Heart left ventricle (tissue), 16 donors: ENCODE measurements at regions of chr4 and their contacts with region 1.

Region 1: GRCh38 chr4:18318682-18319388 is 297.3 kb upstream of the LCORL start:
- DNase-seq: peak; percentile 24 to 66 (median 40)
- ATAC-seq: peak in 3 of 4 donors; percentile 68 to 93 (median 80)
- H3K4me3 ChIP-seq: peak overlapping the region in 9 of 12 donors; percentile 8 to 43 (median 20)
- H3K27ac ChIP-seq: peak overlapping the region in 5 of 12 donors; percentile 21 to 54 (median 27)
- H3K4me1 ChIP-seq: peaks cover 0 to 10% (median 0%) of the 10 kb centered on the region in 12 donors
- H3K27me3 ChIP-seq: no peaks in the 10 kb centered on the region
- CTCF ChIP-seq: no peak
- POLR2A ChIP-seq: no peak

Region 2: DNA sequence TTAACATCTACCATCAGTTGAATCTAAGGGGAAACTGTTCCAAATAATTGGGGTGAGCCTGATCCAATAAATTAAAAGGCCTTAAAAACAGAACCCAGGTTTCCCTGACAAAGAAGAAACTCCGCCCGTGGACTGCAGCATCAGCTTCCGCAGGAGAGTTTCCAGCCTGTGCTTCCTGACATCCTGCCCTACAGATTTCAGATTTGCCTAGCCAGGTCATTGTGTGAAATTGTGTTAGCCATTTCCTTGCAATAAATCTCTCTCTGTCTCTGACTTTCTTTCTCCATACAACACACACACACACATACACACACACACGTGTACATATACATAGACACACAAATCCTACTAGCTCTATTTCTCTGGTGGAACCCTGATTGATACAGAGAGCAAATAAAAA is 249.0 kb before region 1 on chr4:
- intact Hi-C with region 1: loop called in 2 of 10 experiments (anchors 5 to 10 kb)
- DNase-seq: no peak
- ATAC-seq: peak in 1 of 4 donors; percentile 32
- H3K4me3 ChIP-seq: no peak overlapping the region
- H3K27ac ChIP-seq: no peak overlapping the region
- H3K4me1 ChIP-seq: no peaks in the 10 kb centered on the region
- H3K27me3 ChIP-seq: no peaks in the 10 kb centered on the region
- CTCF ChIP-seq: no peak
- POLR2A ChIP-seq: no peak

Region 3: DNA sequence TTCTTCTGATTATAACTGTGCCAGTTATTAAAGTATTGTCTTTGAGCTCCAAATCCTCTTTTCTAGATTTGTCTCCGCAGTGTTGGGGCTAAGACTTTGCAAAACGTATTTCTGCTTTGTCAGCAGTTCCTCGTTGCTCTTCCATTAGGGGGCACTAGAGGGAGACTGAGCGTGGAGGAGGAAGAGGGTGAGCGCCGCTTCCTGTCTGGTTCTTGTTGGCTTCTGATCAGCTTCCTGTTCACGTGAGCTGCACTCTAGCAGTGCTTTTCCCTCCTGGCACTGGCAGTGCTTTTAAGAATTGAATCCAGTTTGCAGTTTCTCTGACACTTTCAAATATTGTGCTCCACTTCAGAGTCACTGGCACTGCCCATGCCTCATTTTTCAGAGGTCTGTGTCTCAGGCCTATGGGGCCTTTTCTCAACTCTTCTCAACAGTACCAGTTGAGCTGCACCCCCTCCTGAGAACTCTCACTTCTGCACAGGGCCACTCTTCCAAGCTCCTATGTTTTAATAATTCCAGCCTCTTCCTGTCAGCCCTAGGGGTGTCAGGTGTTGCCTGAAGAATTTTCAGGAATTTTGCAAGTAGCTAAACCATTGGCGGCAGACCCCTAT is 242.9 kb before region 1 on chr4:
- intact Hi-C with region 1: loop called in 2 of 10 experiments (anchors 5 to 10 kb)
- DNase-seq: peak in 4 of 5 donors; percentile 33 to 57 (median 40)
- ATAC-seq: peak in 2 of 4 donors; percentile 52 to 78
- H3K4me3 ChIP-seq: no peak overlapping the region
- H3K27ac ChIP-seq: peak overlapping the region in 3 of 12 donors; percentile 2 to 41 (median 21)
- H3K4me1 ChIP-seq: peaks cover 0 to 13% (median 3%) of the 10 kb centered on the region in 12 donors
- H3K27me3 ChIP-seq: peaks cover 0 to 4% (median 0%) of the 10 kb centered on the region in 9 donors
- CTCF ChIP-seq: peak; percentile 29 to 60 (median 50)
- POLR2A ChIP-seq: no peak